ENCODE measurements at regions of chr2 and their contacts with region 1.

Region 1: GRCh38 chr2:210503001-210503623 is 26.6 kb upstream of the LANCL1 start:
- DNase-seq: peak; percentile 44
- ATAC-seq: no peak
- H3K4me3 Mint-ChIP-seq: peak overlapping the region; percentile 40
- H3K27ac Mint-ChIP-seq: no peak overlapping the region
- H3K4me1 Mint-ChIP-seq: no peaks in the 10 kb centered on the region
- H3K27me3 Mint-ChIP-seq: peaks cover 15% of the 10 kb centered on the region

Region 2: GRCh38 chr2:209977386-209978239 is 525.5 kb before region 1 on chr2:
- CTCF ChIA-PET with region 1: no interaction called
- DNase-seq: no peak
- ATAC-seq: no peak
- H3K4me3 Mint-ChIP-seq: no peak overlapping the region
- H3K27ac Mint-ChIP-seq: no peak overlapping the region
- H3K4me1 Mint-ChIP-seq: no peaks in the 10 kb centered on the region
- H3K27me3 Mint-ChIP-seq: peaks cover 7% of the 10 kb centered on the region

Region 3: GRCh38 chr2:210421916-210422315 is 81.2 kb before region 1 on chr2:
- CTCF ChIA-PET with region 1: no interaction called
- DNase-seq: no peak
- ATAC-seq: no peak
- H3K4me3 Mint-ChIP-seq: no peak overlapping the region
- H3K27ac Mint-ChIP-seq: no peak overlapping the region
- H3K4me1 Mint-ChIP-seq: no peaks in the 10 kb centered on the region
- H3K27me3 Mint-ChIP-seq: peaks cover 8% of the 10 kb centered on the region

Region 4: DNA sequence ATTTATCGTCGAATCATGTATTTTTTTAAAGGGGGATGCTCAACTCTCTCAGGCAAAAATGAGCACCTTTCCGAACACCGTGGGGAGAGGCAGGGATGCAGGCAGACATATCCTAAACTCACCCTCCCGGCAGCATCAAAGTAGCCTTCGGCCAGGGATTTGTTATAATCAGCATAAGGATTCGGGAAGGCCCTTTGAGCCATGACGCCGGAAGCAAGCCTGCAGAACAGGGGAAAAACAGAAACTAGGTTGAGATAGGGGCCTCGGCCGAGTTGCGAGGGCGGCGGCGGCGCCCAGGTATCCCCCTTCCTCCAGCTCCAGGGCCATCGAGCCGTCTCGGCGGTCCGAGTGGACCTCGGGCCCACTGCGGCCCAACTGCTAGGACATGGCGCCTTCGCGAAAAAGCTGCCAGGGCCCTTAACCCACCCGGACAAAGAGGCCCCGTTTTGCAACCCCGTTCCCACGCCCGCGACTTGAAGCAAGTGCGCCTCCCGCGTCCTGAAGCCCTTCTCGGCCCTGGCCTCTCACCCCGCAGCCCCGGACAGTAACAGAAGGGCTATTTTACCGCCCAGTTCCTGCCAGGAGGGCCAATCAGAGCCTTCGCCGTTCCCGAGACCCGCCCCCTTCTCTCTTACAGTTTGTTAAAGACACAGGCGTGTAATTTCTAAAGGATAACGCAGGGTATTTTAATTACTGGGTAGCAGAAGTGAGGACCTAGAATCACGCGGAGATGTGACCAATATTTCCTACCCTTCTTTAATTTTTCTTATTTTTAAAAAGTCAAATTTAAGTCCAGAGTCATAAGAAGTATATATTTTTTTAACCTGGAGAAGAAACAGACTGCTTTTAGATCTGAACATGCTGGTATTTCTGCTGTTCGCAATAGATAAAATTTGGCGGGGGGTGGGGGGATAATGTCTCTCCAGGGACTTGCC is 26.7 kb before region 1 on chr2 and contains the start of gene LANCL1:
- CTCF ChIA-PET with region 1: interaction called, 12 read pairs
- DNase-seq: peak; percentile 92
- ATAC-seq: peak; percentile 100
- H3K4me3 Mint-ChIP-seq: peak within 1 kb of the TSS; percentile 90
- H3K27ac Mint-ChIP-seq: peak within 1 kb of the TSS; percentile 97
- H3K4me1 Mint-ChIP-seq: peaks cover 37% of the 10 kb centered on the region
- H3K27me3 Mint-ChIP-seq: no peaks in the 10 kb centered on the region
- total RNA-seq, gene LANCL1: 34.7 to 37.9 TPM

Region 5: GRCh38 chr2:210517252-210517651 is 14.1 kb after region 1 on chr2:
- CTCF ChIA-PET with region 1: interaction called, 10 read pairs
- DNase-seq: no peak
- ATAC-seq: no peak
- H3K4me3 Mint-ChIP-seq: no peak overlapping the region
- H3K27ac Mint-ChIP-seq: no peak overlapping the region
- H3K4me1 Mint-ChIP-seq: peaks cover 4% of the 10 kb centered on the region
- H3K27me3 Mint-ChIP-seq: peaks cover 25% of the 10 kb centered on the region

Measured in activated CD8-positive, alpha-beta memory T cell treated with anti-CD3 and anti-CD28 coated beads, Interleukin-2, amount 10 ng/mL, durations not matched to agents 7 days and 5 days (primary cell).